Activated CD4-positive, alpha-beta T cell treated with anti-CD3 and anti-CD28 coated beads for 36 hours (primary cell): ENCODE measurements at regions of chr16 and their contacts with region 1.

Region 1: DNA sequence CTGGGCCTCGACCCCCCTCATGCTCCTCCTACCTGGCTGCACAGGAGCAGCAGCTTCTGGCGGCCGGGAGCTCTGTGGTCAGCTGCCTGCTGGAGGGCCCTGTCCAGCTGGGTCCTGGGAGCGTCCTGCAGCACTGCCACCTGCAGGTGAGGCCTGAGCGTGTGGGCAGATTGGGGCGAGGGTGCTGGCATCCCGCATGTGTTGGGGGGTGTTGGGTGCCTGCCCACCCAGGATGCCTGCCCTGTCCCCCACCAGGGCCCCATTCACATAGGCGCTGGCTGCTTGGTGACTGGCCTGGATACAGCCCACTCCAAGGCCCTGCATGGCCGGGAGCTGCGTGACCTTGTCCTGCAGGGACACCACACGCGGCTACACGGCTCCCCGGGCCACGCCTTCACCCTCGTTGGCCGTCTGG is 16.5 kb downstream of the FCSK start:
- DNase-seq: no peak
- ATAC-seq: no peak
- H3K4me3 Mint-ChIP-seq: no peak overlapping the region
- H3K27ac Mint-ChIP-seq: no peak overlapping the region
- H3K4me1 Mint-ChIP-seq: peaks cover 4% of the 10 kb centered on the region
- H3K27me3 Mint-ChIP-seq: no peaks in the 10 kb centered on the region

Region 2: GRCh38 chr16:70158261-70158939 is 312.5 kb before region 1 on chr16:
- CTCF ChIA-PET with region 1: no interaction called
- POLR2A ChIA-PET with region 1: no interaction called
- intact Hi-C with region 1: no loop called
- DNase-seq: no peak
- ATAC-seq: no peak
- H3K4me3 Mint-ChIP-seq: no peak overlapping the region
- H3K27ac Mint-ChIP-seq: no peak overlapping the region
- H3K4me1 Mint-ChIP-seq: no peaks in the 10 kb centered on the region
- H3K27me3 Mint-ChIP-seq: no peaks in the 10 kb centered on the region

Region 3: GRCh38 chr16:70289229-70290098 is 181.5 kb before region 1 on chr16 and contains the start of gene AARS1:
- CTCF ChIA-PET with region 1: no interaction called
- POLR2A ChIA-PET with region 1: no interaction called
- intact Hi-C with region 1: loop called in 1 of 2 experiments (anchors 1 kb)
- DNase-seq: peak; percentile 96
- ATAC-seq: peak; percentile 99
- H3K4me3 Mint-ChIP-seq: peak within 1 kb of the TSS; percentile 92
- H3K27ac Mint-ChIP-seq: peak within 1 kb of the TSS; percentile 96
- H3K4me1 Mint-ChIP-seq: peaks cover 37% of the 10 kb centered on the region
- H3K27me3 Mint-ChIP-seq: no peaks in the 10 kb centered on the region
- total RNA-seq, gene AARS1: 180 to 189 TPM

Region 4: GRCh38 chr16:70402916-70403659 is 67.8 kb before region 1 on chr16:
- CTCF ChIA-PET with region 1: no interaction called
- POLR2A ChIA-PET with region 1: no interaction called
- intact Hi-C with region 1: loop called (anchors 1 to 5 kb)
- DNase-seq: no peak
- ATAC-seq: no peak
- H3K4me3 Mint-ChIP-seq: no peak overlapping the region
- H3K27ac Mint-ChIP-seq: no peak overlapping the region
- H3K4me1 Mint-ChIP-seq: peaks cover 33% of the 10 kb centered on the region
- H3K27me3 Mint-ChIP-seq: no peaks in the 10 kb centered on the region

Region 5: GRCh38 chr16:70438969-70439862 is 31.7 kb before region 1 on chr16 and contains the start of gene ST3GAL2:
- CTCF ChIA-PET with region 1: no interaction called
- POLR2A ChIA-PET with region 1: no interaction called
- intact Hi-C with region 1: loop called in 1 of 2 experiments (anchors 1 kb)
- DNase-seq: peak; percentile 97
- ATAC-seq: peak; percentile 97
- H3K4me3 Mint-ChIP-seq: peak within 1 kb of the TSS; percentile 96
- H3K27ac Mint-ChIP-seq: peak within 1 kb of the TSS; percentile 89
- H3K4me1 Mint-ChIP-seq: peaks cover 33% of the 10 kb centered on the region
- H3K27me3 Mint-ChIP-seq: no peaks in the 10 kb centered on the region
- total RNA-seq, gene ST3GAL2: 14.8 to 16.6 TPM

Region 6: GRCh38 chr16:70495425-70496182 is 24.7 kb after region 1 on chr16:
- CTCF ChIA-PET with region 1: no interaction called
- POLR2A ChIA-PET with region 1: no interaction called
- intact Hi-C with region 1: loop called (anchors 1 to 2 kb)
- DNase-seq: no peak
- ATAC-seq: no peak
- H3K4me3 Mint-ChIP-seq: no peak overlapping the region
- H3K27ac Mint-ChIP-seq: no peak overlapping the region
- H3K4me1 Mint-ChIP-seq: peaks cover 20% of the 10 kb centered on the region
- H3K27me3 Mint-ChIP-seq: no peaks in the 10 kb centered on the region

Region 7: GRCh38 chr16:71439523-71439922 is 968.6 kb after region 1 on chr16:
- CTCF ChIA-PET with region 1: no interaction called
- POLR2A ChIA-PET with region 1: no interaction called
- intact Hi-C with region 1: no loop called
- DNase-seq: no peak
- ATAC-seq: no peak
- H3K4me3 Mint-ChIP-seq: no peak overlapping the region
- H3K27ac Mint-ChIP-seq: no peak overlapping the region
- H3K4me1 Mint-ChIP-seq: no peaks in the 10 kb centered on the region
- H3K27me3 Mint-ChIP-seq: peaks cover 25% of the 10 kb centered on the region